Mammary epithelial cell (primary cell): ENCODE measurements at regions of chr19 and their contacts with region 1.

Region 1: GRCh38 chr19:56507446-56508289 is at the start of gene ZNF471:
- DNase-seq: peak; percentile 97
- H3K4me3 ChIP-seq: peak within 1 kb of the TSS; percentile 46 to 73 (median 55)
- H3K27ac ChIP-seq: peak within 1 kb of the TSS; percentile 1
- H3K4me1 ChIP-seq: peaks cover 5% of the 10 kb centered on the region
- H3K27me3 ChIP-seq: no peaks in the 10 kb centered on the region
- CTCF ChIP-seq: no peak
- total RNA-seq, gene ZNF471: 4.3 to 8.2 TPM

Region 2: GRCh38 chr19:56477429-56478338 is 30.0 kb before region 1 on chr19:
- CTCF ChIA-PET with region 1: no interaction called
- dilution Hi-C with region 1: no loop called
- in situ Hi-C with region 1: no loop called
- intact Hi-C with region 1: loop called (anchors 2 kb)
- DNase-seq: peak; percentile 94
- H3K4me3 ChIP-seq: peak overlapping the region; percentile 47 to 64 (median 61)
- H3K27ac ChIP-seq: no peak overlapping the region
- H3K4me1 ChIP-seq: peaks cover 4% of the 10 kb centered on the region
- H3K27me3 ChIP-seq: no peaks in the 10 kb centered on the region
- CTCF ChIP-seq: no peak

Region 3: DNA sequence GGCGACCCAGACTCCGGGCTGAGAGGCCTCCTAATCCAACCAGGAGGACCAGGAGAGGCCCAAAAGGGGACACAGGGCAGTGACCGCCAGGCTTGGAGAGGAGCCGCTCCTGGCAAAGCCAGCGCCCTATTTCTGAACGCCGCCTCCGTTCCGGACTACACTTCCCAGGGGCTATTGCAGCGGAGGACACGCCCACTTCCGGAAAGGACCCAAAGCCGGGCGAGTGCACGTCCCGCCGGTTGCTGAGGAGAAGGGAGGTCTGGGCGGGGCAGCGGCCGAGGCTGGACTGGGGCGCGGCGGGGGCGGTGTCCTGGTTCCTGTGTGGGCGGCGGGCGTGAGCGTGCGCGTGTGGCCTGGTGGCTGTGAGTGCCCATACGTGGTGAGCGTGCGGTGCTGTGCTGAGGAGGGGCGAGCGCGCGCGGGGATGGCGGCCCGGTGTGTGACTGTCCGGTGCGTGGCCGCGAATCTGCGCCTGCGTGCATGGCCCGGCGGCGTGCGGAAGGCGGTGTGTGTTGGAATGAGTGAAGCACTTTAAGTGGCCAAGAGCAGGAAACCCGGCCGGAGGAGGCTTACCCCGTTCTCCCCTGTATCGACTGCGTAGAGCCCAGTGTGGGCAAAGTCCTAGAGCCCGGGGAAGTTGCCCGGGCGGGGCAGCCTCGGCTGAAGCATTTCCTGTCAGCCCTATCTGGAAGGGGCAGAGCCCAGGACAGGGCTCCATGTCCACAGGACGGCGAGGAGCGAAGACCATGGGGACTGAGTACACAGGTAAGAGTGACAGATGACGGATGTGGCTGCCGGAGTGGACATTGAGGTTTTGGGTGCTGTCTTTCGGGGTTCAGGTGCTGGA is 59.8 kb after region 1 on chr19 and contains the start of gene ZNF470:
- CTCF ChIA-PET with region 1: no interaction called
- dilution Hi-C with region 1: no loop called
- in situ Hi-C with region 1: no loop called
- intact Hi-C with region 1: loop called (anchors 5 kb)
- DNase-seq: peak; percentile 93
- H3K4me3 ChIP-seq: peak within 1 kb of the TSS; percentile 56 to 92 (median 79)
- H3K27ac ChIP-seq: peak within 1 kb of the TSS; percentile 45
- H3K4me1 ChIP-seq: no peaks in the 10 kb centered on the region
- H3K27me3 ChIP-seq: no peaks in the 10 kb centered on the region
- CTCF ChIP-seq: no peak
- total RNA-seq, gene ZNF470: 4.3 to 5.8 TPM

Region 4: GRCh38 chr19:56577719-56578602 is 70.3 kb after region 1 on chr19:
- CTCF ChIA-PET with region 1: no interaction called
- dilution Hi-C with region 1: no loop called
- in situ Hi-C with region 1: no loop called
- intact Hi-C with region 1: no loop called
- DNase-seq: no peak
- H3K4me3 ChIP-seq: no peak overlapping the region
- H3K27ac ChIP-seq: no peak overlapping the region
- H3K4me1 ChIP-seq: no peaks in the 10 kb centered on the region
- H3K27me3 ChIP-seq: no peaks in the 10 kb centered on the region
- CTCF ChIP-seq: no peak